ENCODE measurements at regions of chr13 and their contacts with region 1.

Region 1: DNA sequence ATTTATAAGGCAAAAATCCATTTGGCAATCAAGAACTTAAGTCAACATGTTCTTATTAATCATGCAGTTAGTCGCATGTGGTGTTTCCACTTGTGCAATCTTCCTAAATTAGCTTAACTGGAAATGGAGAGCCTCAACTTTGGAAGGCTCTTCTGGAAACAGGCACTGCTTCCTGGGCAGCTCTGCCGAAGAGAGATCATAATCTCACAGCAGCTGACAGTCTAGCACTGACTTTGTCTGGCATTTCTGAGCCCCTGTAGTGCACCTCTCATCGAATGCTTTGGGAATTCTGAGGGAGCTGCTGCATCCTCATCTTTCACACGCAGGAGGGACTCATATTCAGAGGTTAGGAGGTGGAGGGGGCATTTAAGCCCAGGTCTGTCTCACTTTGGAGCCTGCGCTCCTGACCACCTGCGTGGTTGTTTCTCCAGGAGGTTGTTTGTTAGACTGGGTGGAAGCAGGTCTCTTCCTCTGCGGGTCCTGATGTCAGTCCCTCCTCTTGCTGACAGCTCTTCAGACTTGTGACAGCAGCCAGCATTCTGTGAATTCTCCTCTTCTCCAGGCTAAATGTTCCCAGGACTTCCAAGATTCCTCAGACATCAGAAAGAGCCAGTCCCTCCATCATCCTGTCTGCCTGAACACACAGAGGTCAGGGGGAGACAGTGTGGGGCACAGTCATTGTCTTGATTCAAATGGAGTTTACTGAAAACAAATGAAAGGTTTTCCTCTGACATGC is 100.4 kb upstream of the GJB6 start:
- DNase-seq: no peak
- ATAC-seq: no peak

Region 2: GRCh38 chr13:20425819-20426219 is 93.3 kb after region 1 on chr13:
- intact Hi-C with region 1: no loop called
- DNase-seq: no peak
- ATAC-seq: no peak

Region 3: GRCh38 chr13:20451397-20451796 is 118.9 kb after region 1 on chr13:
- intact Hi-C with region 1: loop called in 1 of 2 experiments (anchors 10 kb)
- DNase-seq: no peak
- ATAC-seq: no peak

Measured in left cardiac atrium (tissue), 4 donors.